GM13977 (cell line): ENCODE measurements at regions of chr10 and their contacts with region 1.

Region 1: DNA sequence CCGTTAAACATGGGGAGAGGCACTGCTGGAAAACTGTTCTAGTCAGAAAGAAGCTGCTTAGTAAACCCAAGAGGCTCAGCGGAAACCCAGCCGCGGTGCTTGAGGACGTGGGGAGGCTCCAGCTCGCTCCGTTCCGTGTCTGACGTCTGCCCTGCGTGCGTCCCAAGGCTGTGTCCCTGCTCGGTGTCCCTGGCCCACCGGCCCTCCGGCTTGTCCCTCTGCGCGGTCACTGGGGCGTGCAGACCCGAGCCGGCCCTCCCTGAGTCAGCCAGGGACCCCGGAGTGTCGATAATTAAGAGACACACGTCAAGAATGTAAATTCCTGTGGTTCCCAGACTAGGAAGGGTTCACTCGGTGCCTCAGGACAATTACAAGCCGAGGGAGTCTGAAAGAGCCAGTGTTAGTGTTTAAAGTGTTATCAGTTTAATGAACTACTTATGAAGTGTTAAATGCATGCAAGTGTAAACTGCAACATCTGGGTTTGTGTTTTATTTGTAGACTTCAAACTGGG is 98.9 kb downstream of the WDR11 start:
- DNase-seq: no peak
- CTCF ChIP-seq: no peak

Region 2: DNA sequence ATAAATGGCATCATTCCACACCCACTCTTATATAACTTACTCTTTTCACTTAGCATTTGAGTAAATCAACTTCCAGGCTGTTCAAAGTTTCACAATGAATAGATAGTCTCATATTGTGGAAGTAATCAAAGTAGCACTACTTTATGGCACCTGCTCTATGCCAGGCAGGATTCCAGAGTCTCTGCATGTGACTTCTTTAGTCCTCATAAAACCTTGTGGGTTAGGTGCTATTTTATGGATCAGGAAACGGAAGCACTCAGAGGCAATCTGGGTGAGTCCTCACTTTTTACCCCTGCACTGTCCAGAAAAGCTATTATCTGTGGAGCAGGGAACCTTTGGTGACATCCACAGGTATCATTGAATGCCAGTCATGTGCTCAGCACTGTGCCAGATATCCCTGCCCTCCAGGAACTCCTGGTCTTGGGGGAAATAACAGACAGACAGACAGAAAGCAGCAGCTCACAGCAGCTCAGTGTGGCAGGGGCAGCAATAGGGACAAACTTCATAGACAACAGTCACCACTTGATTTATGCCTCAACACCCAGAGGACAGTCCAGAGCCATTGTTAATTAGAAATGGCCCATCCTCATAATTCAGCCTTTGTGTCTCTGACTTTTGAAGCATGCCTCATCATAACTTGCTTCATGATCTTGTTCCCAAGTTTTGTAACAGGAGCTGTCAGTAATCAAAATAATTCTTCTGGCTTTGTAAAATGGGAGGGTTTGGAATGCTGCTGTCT is 897.0 kb before region 1 on chr10:
- in situ Hi-C with region 1: no loop called
- DNase-seq: no peak
- CTCF ChIP-seq: no peak

Region 3: GRCh38 chr10:120824881-120825309 is 125.2 kb before region 1 on chr10:
- in situ Hi-C with region 1: no loop called
- DNase-seq: peak; percentile 31
- CTCF ChIP-seq: peak; percentile 69

Region 4: GRCh38 chr10:121608469-121609190 is 658.5 kb after region 1 on chr10:
- in situ Hi-C with region 1: loop called (anchors 10 kb)
- DNase-seq: peak; percentile 72
- CTCF ChIP-seq: peak; percentile 89